Activated naive CD4-positive, alpha-beta T cell treated with anti-CD3 and anti-CD28 coated beads for 36 hours (primary cell): ENCODE measurements at regions of chr2 and their contacts with region 1.

Region 1: GRCh38 chr2:108960006-108960405 is 29.0 kb downstream of the EDAR start:
- DNase-seq: no peak
- H3K4me3 Mint-ChIP-seq: no peak overlapping the region
- H3K27ac Mint-ChIP-seq: no peak overlapping the region
- H3K4me1 Mint-ChIP-seq: peaks cover 83% of the 10 kb centered on the region
- H3K27me3 Mint-ChIP-seq: no peaks in the 10 kb centered on the region

Region 2: GRCh38 chr2:108927936-108928659 is 31.9 kb before region 1 on chr2:
- CTCF ChIA-PET with region 1: interaction called, 11 read pairs
- intact Hi-C with region 1: loop called (anchors 2 kb)
- DNase-seq: peak; percentile 66
- H3K4me3 Mint-ChIP-seq: no peak overlapping the region
- H3K27ac Mint-ChIP-seq: no peak overlapping the region
- H3K4me1 Mint-ChIP-seq: no peaks in the 10 kb centered on the region
- H3K27me3 Mint-ChIP-seq: no peaks in the 10 kb centered on the region

Region 3: DNA sequence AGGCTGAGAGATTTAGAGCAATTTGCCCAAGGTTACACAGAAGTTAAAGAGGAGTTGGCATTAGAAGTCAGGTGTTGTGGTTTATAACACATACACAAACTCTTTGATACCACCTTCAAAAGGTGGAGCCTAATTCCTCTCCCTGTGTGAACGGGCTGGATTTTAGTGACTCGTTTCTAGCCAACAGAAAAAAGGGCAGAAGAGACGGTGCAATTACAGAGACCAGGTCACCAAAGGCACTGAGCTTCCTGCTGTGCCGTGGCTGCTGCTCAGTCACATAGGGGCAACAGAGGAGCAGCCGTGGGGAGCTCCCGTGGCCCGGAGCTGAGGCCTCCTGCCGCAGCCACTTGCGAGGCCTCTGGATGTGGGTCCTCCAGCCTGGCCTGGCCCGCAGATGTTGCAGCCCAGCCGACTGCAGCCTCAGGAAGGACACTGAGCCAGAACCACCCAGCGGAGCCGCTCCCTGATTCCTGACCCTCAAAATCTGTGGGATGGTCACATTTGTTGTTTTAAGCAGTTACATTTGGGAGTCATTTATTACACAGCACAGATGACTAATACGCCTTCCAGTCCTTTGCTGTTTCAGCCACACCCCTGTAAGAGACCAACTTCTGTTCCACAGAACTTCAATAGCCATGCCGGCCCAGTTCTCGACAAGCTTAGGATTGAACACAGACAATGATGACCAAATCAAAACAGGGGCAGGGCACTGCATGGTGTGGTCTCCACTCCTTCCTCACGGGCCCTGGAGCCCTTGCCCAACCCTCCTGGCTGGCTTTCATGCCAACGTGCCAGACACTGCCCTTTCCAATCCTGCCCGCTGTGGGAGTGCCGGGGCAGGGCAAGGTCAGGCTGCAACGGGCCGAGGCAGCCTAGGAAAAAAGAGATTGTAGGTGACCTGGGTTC is 11.9 kb after region 1 on chr2:
- CTCF ChIA-PET with region 1: interaction called, 17 read pairs
- intact Hi-C with region 1: loop called (anchors 1 kb)
- DNase-seq: no peak
- H3K4me3 Mint-ChIP-seq: no peak overlapping the region
- H3K27ac Mint-ChIP-seq: no peak overlapping the region
- H3K4me1 Mint-ChIP-seq: peaks cover 85% of the 10 kb centered on the region
- H3K27me3 Mint-ChIP-seq: no peaks in the 10 kb centered on the region